ENCODE measurements at regions of chr1 and their contacts with region 1.

Region 1: GRCh38 chr1:62735491-62736171 is 47.4 kb upstream of the DOCK7 start:
- DNase-seq: no peak
- ATAC-seq: peak in 6 of 8 donors; percentile 33 to 79 (median 62)
- H3K4me3 ChIP-seq: no peak overlapping the region
- H3K27ac ChIP-seq: peak overlapping the region in 1 of 10 donors; percentile 43
- H3K4me1 ChIP-seq: peaks cover 0 to 27% (median 12%) of the 10 kb centered on the region in 9 donors
- H3K27me3 ChIP-seq: peaks cover 0 to 21% (median 4%) of the 10 kb centered on the region in 7 donors
- CTCF ChIP-seq: no peak

Region 2: DNA sequence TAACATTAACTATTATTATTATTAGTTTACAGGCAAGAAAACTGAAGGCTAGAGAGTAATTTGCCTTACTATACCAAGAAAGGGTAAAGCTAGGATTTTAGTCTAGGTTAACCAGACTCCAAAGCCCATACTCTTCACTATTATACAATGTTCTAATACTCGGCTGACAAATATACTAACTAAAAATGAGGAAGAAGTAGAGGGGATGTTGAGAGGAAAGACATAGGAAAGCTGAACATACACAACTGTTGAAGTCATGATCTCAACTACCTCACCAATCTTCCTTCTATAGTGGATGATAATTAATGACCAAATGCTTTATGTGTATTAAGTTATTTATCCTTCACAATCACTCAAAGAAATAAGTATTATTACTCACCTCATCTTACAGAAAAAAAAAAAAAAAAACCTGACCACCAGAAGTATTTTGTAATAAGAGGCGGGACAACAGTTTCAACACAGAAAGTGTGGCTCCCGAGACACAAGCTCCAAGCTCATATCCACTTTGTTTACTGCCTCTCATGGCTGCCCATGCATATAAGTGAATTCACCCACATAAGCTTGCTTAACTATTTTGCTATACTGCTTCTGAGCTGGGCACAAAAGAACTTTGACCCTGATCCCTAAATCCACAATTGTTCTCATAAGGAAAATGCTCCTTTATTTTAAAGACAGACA is 220.7 kb before region 1 on chr1:
- intact Hi-C with region 1: loop called in 1 of 10 experiments (anchors 5 kb)
- DNase-seq: no peak
- ATAC-seq: no peak
- H3K4me3 ChIP-seq: no peak overlapping the region
- H3K27ac ChIP-seq: no peak overlapping the region
- H3K4me1 ChIP-seq: peaks cover 0 to 6% (median 0%) of the 10 kb centered on the region in 9 donors
- H3K27me3 ChIP-seq: no peaks in the 10 kb centered on the region
- CTCF ChIP-seq: no peak

Region 3: DNA sequence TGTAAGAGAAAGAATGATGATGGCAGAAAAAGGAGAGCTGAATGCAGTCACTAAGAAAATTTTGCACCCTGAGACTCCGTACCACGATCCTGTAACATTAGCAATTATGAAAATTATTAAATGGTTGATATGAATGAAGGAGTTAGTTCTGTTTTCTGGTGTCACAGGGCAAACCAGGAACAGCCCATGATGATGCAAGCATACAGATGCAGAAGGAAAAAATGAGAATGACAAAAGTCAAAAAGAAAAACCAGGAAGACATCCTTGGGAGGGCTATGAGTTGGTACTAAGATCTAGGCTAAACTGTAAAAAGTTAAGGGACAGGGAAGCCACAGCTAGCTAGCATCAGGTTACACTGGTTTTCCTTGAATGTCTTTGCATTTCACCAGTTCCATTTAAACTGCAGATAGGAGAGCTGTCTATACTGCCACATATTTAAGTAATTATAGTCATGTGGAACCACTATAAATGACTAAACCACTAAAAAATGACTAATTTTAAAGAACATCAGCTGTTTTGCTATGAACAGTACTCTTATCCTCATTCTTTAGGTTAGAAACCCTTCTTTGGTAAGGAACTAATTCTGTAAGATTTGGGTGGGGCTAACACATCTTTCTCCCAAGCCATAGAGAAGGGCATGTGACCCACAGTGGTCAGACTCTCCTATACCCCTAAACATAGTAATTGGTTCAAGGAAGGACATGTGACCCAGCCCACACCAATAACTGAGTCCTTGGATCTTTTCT is 58.8 kb before region 1 on chr1:
- intact Hi-C with region 1: no loop called
- DNase-seq: no peak
- ATAC-seq: no peak
- H3K4me3 ChIP-seq: no peak overlapping the region
- H3K27ac ChIP-seq: no peak overlapping the region
- H3K4me1 ChIP-seq: peaks cover 0 to 12% (median 0%) of the 10 kb centered on the region in 9 donors
- H3K27me3 ChIP-seq: no peaks in the 10 kb centered on the region
- CTCF ChIP-seq: no peak

Measured in heart right ventricle (tissue), 16 donors.